GM12878 (cell line): ENCODE measurements at regions of chr19 and their contacts with region 1.

Region 1: GRCh38 chr19:19404879-19405860 is at the start of gene GATAD2A:
- DNase-seq: peak; percentile 44
- ATAC-seq: peak; percentile 90
- H3K4me3 ChIP-seq: peak within 1 kb of the TSS; percentile 79
- H3K27ac ChIP-seq: peak within 1 kb of the TSS; percentile 62
- H3K4me1 ChIP-seq: peaks cover 19% of the 10 kb centered on the region
- H3K27me3 ChIP-seq: no peaks in the 10 kb centered on the region
- CTCF ChIP-seq: peak; percentile 16 to 58 (median 46); a peak in 3 of 6 replicates
- EP300 ChIP-seq: no peak
- POLR2A ChIP-seq: peak; percentile 78
- RAD21 ChIP-seq: peak; percentile 32; the same call in 1 of the 2 replicates
- polyA plus RNA-seq, gene GATAD2A: 2.6 to 2.7 TPM

Region 2: GRCh38 chr19:19120308-19121231 is 284.6 kb before region 1 on chr19:
- CTCF ChIA-PET with region 1: no interaction called
- POLR2A ChIA-PET with region 1: no interaction called
- RAD21 ChIA-PET with region 1: no interaction called
- SMC1A ChIA-PET with region 1: no interaction called
- in situ Hi-C with region 1: no loop called
- intact Hi-C with region 1: no loop called
- DNase-seq: no peak
- ATAC-seq: peak; percentile 28
- H3K4me3 ChIP-seq: no peak overlapping the region
- H3K27ac ChIP-seq: no peak overlapping the region
- H3K4me1 ChIP-seq: no peaks in the 10 kb centered on the region
- H3K27me3 ChIP-seq: no peaks in the 10 kb centered on the region
- CTCF ChIP-seq: no peak
- EP300 ChIP-seq: no peak
- POLR2A ChIP-seq: no peak
- RAD21 ChIP-seq: no peak

Region 3: GRCh38 chr19:19361075-19361594 is 44.0 kb before region 1 on chr19:
- CTCF ChIA-PET with region 1: interaction called, 85 read pairs
- POLR2A ChIA-PET with region 1: interaction called, 10 read pairs
- RAD21 ChIA-PET with region 1: interaction called, 25 read pairs
- SMC1A ChIA-PET with region 1: interaction called, 11 read pairs
- in situ Hi-C with region 1: no loop called
- intact Hi-C with region 1: loop called (anchors 2 kb)
- DNase-seq: peak; percentile 73
- ATAC-seq: peak; percentile 90
- H3K4me3 ChIP-seq: no peak overlapping the region
- H3K27ac ChIP-seq: no peak overlapping the region; the same call in 1 of the 2 replicates
- H3K4me1 ChIP-seq: 0 out of 2 replicates have a peak, but pooled peaks cover 2% of the 10 kb centered on the region
- H3K27me3 ChIP-seq: no peaks in the 10 kb centered on the region
- CTCF ChIP-seq: peak; percentile 70 to 84 (median 77)
- EP300 ChIP-seq: no peak
- POLR2A ChIP-seq: no peak
- RAD21 ChIP-seq: 0 out of 2 replicates have a peak, but pooled peaks have one; percentile 34

Region 4: DNA sequence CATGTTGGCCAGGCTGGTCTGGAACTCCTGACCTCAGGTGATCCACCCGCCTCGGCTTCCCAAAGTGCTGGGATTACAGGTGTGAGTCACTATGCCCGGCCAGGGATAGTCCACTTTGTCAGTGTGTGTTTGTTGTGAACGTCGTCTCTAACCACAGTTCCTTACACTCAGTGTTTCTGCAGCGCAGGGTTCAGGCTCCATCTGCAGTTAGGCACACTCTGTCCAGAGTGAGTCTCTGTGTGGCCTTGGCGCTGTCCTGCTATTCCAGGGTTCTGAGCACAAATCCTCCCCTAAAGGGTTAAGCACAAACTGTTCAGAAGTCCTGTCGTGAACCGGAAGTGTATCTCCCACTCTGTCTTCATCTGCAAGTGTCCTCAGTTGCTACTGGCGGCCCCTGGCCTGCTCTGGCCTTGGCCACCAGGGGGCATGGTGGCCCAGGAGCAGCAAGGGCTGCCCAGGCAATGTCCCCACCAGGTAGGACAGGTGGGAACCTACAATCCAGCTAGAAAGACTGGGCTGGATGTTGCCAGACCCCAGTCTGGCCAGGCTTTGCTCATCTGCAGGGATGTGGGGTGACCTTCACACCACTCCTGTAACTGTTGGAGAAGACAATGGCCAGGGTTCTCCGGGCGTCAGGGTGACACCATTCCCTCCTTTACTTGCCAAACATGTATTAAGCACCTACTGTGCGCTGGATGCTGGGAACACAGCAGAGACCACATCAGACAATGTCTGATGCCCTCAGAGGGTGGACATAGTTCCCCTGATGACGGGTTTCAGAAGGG is 38.4 kb before region 1 on chr19:
- CTCF ChIA-PET with region 1: interaction called, 85 read pairs
- POLR2A ChIA-PET with region 1: interaction called, 10 read pairs
- RAD21 ChIA-PET with region 1: interaction called, 25 read pairs
- SMC1A ChIA-PET with region 1: interaction called, 11 read pairs
- in situ Hi-C with region 1: no loop called
- intact Hi-C with region 1: loop called (anchors 2 kb)
- DNase-seq: no peak
- ATAC-seq: peak; percentile 95
- H3K4me3 ChIP-seq: no peak overlapping the region
- H3K27ac ChIP-seq: no peak overlapping the region
- H3K4me1 ChIP-seq: peaks cover 3% of the 10 kb centered on the region; the same call in 1 of the 2 replicates
- H3K27me3 ChIP-seq: no peaks in the 10 kb centered on the region
- CTCF ChIP-seq: peak; percentile 94 to 99 (median 96)
- EP300 ChIP-seq: no peak
- POLR2A ChIP-seq: no peak
- RAD21 ChIP-seq: peak; percentile 85

Region 5: DNA sequence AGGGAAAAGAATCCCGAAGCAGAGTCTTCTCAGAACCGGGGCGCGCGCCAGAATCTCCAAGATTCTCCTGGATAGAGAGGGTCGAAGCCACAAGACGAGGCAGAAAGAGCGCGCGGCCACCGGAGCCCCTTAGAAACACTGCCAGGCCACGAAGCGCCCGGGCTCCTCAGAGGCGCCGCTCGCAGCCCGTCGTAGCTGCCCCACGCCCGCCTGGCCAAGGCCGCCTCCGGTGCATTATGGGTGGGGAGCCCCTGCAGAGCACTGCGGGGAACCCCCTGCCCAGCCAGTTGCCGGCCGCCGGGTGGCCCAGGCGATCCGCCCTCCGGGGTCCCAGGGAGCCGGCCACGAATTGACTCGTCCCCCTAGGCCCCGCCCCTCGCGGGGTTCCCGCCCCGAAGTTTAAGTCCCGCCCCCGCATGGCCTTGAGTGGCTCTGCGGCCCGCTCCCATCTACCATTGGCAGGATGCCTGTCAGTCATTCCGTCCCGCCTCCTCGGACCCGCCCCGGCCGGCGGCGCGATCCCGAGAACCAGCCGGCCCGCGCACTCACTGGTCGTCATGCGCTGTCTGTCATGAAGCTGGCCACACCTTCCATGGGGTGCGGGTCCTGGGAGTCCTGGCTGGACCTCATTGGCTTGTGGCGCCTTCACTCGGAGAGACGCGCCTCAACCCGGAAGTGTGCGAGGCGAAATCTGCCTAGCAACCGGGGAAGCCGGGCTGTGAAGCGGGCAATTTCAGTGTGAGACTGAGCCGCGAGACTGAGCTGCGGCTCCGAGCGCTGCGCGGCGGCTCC is 19.9 kb before region 1 on chr19:
- CTCF ChIA-PET with region 1: interaction called, 9 read pairs
- POLR2A ChIA-PET with region 1: interaction called, 16 read pairs
- RAD21 ChIA-PET with region 1: interaction called, 15 read pairs
- SMC1A ChIA-PET with region 1: interaction called, 12 read pairs
- in situ Hi-C with region 1: no loop called
- intact Hi-C with region 1: loop called (anchors 2 kb)
- DNase-seq: peak; percentile 99
- ATAC-seq: peak; percentile 95
- H3K4me3 ChIP-seq: peak overlapping the region; percentile 69
- H3K27ac ChIP-seq: peak overlapping the region; percentile 89
- H3K4me1 ChIP-seq: peaks cover 19% of the 10 kb centered on the region
- H3K27me3 ChIP-seq: no peaks in the 10 kb centered on the region
- CTCF ChIP-seq: peak; percentile 9 to 52 (median 27); a peak in 4 of 6 replicates
- EP300 ChIP-seq: no peak
- POLR2A ChIP-seq: peak; percentile 80
- RAD21 ChIP-seq: peak; percentile 51

Region 6: GRCh38 chr19:19418555-19419260 is 13.5 kb after region 1 on chr19:
- CTCF ChIA-PET with region 1: interaction called, 30 read pairs
- POLR2A ChIA-PET with region 1: interaction called, 4 read pairs
- RAD21 ChIA-PET with region 1: interaction called, 5 read pairs
- SMC1A ChIA-PET with region 1: interaction called, 16 read pairs
- in situ Hi-C with region 1: no loop called
- intact Hi-C with region 1: no loop called
- DNase-seq: no peak
- ATAC-seq: peak; percentile 25
- H3K4me3 ChIP-seq: peak overlapping the region; percentile 19; the same call in 1 of the 2 replicates
- H3K27ac ChIP-seq: peak overlapping the region; percentile 5; the same call in 1 of the 2 replicates
- H3K4me1 ChIP-seq: peaks cover 25% of the 10 kb centered on the region
- H3K27me3 ChIP-seq: no peaks in the 10 kb centered on the region
- CTCF ChIP-seq: no peak
- EP300 ChIP-seq: no peak
- POLR2A ChIP-seq: no peak
- RAD21 ChIP-seq: no peak

Region 7: GRCh38 chr19:19459707-19460251 is 54.6 kb after region 1 on chr19:
- CTCF ChIA-PET with region 1: interaction called, 5 read pairs
- POLR2A ChIA-PET with region 1: interaction called, 9 read pairs
- RAD21 ChIA-PET with region 1: interaction called, 21 read pairs
- SMC1A ChIA-PET with region 1: no interaction called
- in situ Hi-C with region 1: no loop called
- intact Hi-C with region 1: loop called (anchors 5 kb)
- DNase-seq: no peak
- ATAC-seq: peak; percentile 75
- H3K4me3 ChIP-seq: peak overlapping the region; percentile 29; the same call in 1 of the 2 replicates
- H3K27ac ChIP-seq: peak overlapping the region; percentile 79
- H3K4me1 ChIP-seq: peaks cover 54% of the 10 kb centered on the region
- H3K27me3 ChIP-seq: no peaks in the 10 kb centered on the region
- CTCF ChIP-seq: no peak
- EP300 ChIP-seq: no peak
- POLR2A ChIP-seq: no peak; the same call in 1 of the 2 replicates
- RAD21 ChIP-seq: no peak